BJ (cell line): ENCODE measurements at regions of chr13 and their contacts with region 1.

Region 1: GRCh38 chr13:48818495-48819031 is 157.1 kb upstream of the FNDC3A start:
- DNase-seq: peak; percentile 97
- H3K4me3 ChIP-seq: no peak overlapping the region
- H3K27me3 ChIP-seq: no peaks in the 10 kb centered on the region
- CTCF ChIP-seq: no peak

Region 2: DNA sequence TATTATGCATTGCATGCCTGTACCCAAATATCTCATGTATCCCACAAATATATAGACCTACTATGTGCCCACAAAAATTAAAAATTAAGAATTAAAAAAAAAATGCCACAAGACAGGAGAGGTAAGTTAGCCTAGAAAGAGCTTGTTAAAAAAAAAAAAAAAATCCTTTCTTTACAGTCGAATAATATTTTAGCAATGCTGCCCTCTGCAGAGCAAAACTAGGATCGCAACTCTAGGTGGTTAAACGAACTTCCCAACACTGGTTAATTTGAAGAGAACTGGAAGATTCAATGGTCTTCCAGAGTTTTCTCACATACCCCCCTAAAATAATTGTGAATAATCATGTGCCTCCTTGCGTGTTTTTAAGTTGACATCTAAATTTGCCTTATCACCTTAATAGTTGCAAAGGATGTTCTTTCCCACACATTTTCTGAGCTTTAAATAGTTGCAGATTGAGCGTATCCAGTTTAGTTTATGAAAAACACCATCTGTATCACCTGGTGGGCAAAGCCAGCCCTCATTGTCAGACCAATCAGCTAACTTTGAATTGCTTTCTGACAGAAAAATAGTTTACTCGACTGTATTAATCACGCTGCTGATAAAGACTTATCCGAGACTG is 238.3 kb before region 1 on chr13:
- CTCF ChIA-PET with region 1: no interaction called
- POLR2A ChIA-PET with region 1: no interaction called
- DNase-seq: peak; percentile 19
- H3K4me3 ChIP-seq: no peak overlapping the region
- H3K27me3 ChIP-seq: peaks cover 4% of the 10 kb centered on the region
- CTCF ChIP-seq: peak; percentile 68

Region 3: DNA sequence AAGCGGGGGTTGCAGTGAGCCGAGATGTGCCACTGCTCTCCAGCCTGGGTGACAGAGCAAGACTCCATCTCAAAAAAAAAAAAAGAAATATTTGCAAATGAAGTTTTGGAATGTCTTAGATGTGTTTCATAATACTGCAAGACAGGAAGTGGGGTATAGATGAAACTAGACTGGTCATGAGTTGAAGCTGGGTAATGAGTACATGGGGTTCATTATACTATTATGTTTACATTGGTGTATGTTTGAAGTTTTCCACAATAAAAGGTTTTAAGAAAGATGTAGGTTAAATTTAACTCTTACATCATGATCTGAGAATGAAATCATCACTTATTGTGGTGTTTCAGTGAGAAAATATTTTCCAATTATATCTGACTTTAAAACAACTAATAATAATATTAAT is 176.1 kb after region 1 on chr13:
- CTCF ChIA-PET with region 1: no interaction called
- POLR2A ChIA-PET with region 1: interaction called, 26 read pairs
- DNase-seq: no peak
- H3K4me3 ChIP-seq: no peak overlapping the region
- H3K27me3 ChIP-seq: no peaks in the 10 kb centered on the region
- CTCF ChIP-seq: no peak